ENCODE measurements at regions of chr1 and their contacts with region 1.

Region 1: DNA sequence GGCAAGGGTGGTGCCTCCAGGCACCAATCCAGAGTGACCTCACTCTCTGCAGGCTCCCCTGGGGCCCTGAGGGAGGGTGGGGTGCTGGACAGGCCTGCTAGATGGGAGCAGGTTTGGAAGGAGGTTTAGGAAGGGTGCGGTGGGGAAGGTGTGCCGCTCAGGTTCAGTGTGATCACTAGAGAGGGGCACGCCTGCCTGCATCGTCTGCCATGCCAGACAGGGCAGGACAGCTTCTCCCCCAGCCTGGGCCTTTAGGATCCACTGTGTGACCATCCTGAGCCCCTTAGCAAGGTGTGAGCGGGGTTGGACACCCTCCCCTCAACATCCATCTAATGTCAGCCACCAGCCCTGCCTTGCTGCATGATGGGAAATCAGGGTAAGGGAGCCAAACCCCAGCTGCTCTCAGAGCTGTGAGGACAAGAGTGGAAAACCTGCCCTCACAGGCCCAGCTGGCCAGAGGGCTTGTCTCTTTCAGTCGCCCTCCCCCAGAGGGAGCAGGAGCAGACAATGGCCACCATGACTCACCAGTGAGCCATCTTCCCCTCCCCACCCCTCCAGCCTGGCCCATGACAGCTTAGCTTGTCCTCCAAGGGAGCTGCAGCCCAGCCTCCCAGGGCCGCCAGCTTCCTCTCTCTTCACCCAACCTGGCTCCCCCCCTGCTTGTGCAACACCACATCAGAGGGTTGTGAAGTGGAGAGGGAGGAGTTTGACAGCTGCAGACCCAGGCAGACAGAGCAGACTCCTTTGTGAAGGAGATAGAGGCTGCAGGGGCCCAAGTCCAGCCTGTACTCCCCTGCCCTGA is 37.0 kb downstream of the NUAK2 start:
- DNase-seq: peak; percentile 85
- ATAC-seq: peak; percentile 71
- H3K4me3 Mint-ChIP-seq: peak overlapping the region; percentile 77
- H3K27ac Mint-ChIP-seq: peak overlapping the region; percentile 91
- H3K4me1 Mint-ChIP-seq: peaks cover 66% of the 10 kb centered on the region
- H3K27me3 Mint-ChIP-seq: peaks cover 23% of the 10 kb centered on the region

Region 2: GRCh38 chr1:205172729-205173366 is 111.7 kb before region 1 on chr1:
- POLR2A ChIA-PET with region 1: no interaction called
- DNase-seq: no peak
- ATAC-seq: no peak
- H3K4me3 Mint-ChIP-seq: no peak overlapping the region
- H3K27ac Mint-ChIP-seq: no peak overlapping the region
- H3K4me1 Mint-ChIP-seq: peaks cover 31% of the 10 kb centered on the region
- H3K27me3 Mint-ChIP-seq: no peaks in the 10 kb centered on the region

Region 3: DNA sequence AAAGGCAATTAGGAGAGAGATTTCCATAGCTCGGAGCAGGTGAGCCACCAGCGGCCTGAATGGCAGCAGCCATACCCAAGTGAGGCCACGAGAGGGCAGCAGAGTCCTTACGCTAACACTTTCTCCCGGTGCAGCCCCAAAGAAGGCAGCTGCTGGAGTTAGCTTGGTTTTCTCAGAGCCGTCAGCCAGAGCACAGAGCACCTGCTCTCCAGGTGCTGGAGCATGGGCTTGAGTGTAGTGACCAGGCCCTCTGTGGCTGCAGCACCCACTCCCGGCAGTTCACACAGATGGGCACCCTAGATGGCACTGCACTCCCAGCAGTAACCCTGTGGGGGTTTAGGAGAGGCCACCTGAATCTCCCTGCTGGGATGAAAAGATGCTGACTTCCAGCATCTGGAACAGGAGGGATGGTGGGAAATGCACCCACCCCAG is 11.0 kb before region 1 on chr1:
- POLR2A ChIA-PET with region 1: interaction called, 41 read pairs
- DNase-seq: peak; percentile 86
- ATAC-seq: peak; percentile 79
- H3K4me3 Mint-ChIP-seq: no peak overlapping the region
- H3K27ac Mint-ChIP-seq: no peak overlapping the region
- H3K4me1 Mint-ChIP-seq: peaks cover 9% of the 10 kb centered on the region
- H3K27me3 Mint-ChIP-seq: peaks cover 7% of the 10 kb centered on the region

Region 4: GRCh38 chr1:205298191-205298994 is 13.8 kb after region 1 on chr1:
- POLR2A ChIA-PET with region 1: interaction called, 12 read pairs
- DNase-seq: no peak
- ATAC-seq: no peak
- H3K4me3 Mint-ChIP-seq: no peak overlapping the region
- H3K27ac Mint-ChIP-seq: no peak overlapping the region
- H3K4me1 Mint-ChIP-seq: peaks cover 8% of the 10 kb centered on the region
- H3K27me3 Mint-ChIP-seq: peaks cover 27% of the 10 kb centered on the region

Region 5: DNA sequence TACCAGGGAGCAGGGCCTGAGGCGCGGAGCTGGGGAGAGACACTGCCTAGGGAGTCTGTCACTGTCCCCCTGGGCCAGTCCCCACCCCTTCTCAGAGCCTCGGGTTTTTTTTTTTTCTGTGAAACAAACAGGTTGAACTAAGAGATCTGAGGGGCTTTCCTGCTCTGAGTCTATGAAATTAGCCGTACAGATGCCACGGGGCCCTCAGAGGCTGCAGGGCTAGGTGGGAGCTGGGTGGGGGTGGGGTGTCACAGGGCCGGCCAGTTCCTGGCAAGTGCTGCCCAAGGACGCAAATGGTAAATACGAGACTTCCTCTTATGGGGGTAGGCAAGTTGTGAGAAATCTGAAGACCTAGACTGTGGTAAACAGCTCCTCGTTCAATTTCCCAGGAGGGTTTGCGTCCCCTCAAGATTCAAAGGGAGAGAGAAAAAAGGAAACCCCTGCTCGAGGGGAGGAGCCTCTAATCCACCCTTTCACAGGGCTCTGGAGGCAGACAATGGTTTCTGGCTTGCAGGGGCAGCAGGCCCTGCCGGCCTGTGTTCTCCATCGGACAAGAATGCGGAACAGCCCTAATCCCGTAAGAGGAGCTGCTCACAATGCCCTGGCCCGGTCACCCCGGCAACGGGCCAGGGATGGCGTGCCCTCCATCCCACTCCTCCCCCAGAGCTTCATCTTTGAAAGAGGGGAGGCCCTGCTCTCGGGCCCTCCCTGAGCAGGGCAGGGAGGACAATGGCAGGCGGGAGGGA is 29.2 kb after region 1 on chr1:
- POLR2A ChIA-PET with region 1: interaction called, 170 read pairs
- DNase-seq: peak; percentile 58
- ATAC-seq: peak; percentile 75
- H3K4me3 Mint-ChIP-seq: peak overlapping the region; percentile 79
- H3K27ac Mint-ChIP-seq: peak overlapping the region; percentile 83
- H3K4me1 Mint-ChIP-seq: peaks cover 43% of the 10 kb centered on the region
- H3K27me3 Mint-ChIP-seq: no peaks in the 10 kb centered on the region

Region 6: GRCh38 chr1:205321164-205321958 is 36.8 kb after region 1 on chr1 and contains the start of gene NUAK2:
- POLR2A ChIA-PET with region 1: interaction called, 170 read pairs
- DNase-seq: peak; percentile 82
- ATAC-seq: peak; percentile 79
- H3K4me3 Mint-ChIP-seq: peak within 1 kb of the TSS; percentile 87
- H3K27ac Mint-ChIP-seq: peak within 1 kb of the TSS; percentile 77
- H3K4me1 Mint-ChIP-seq: peaks cover 40% of the 10 kb centered on the region
- H3K27me3 Mint-ChIP-seq: peaks cover 24% of the 10 kb centered on the region
- total RNA-seq, gene NUAK2: 13.0 to 14.7 TPM

Region 7: GRCh38 chr1:205631727-205632373 is 347.3 kb after region 1 on chr1 and contains the start of gene ELK4:
- POLR2A ChIA-PET with region 1: interaction called, 12 read pairs
- DNase-seq: peak; percentile 99
- ATAC-seq: peak; percentile 81
- H3K4me3 Mint-ChIP-seq: peak within 1 kb of the TSS; percentile 96
- H3K27ac Mint-ChIP-seq: peak within 1 kb of the TSS; percentile 99
- H3K4me1 Mint-ChIP-seq: peaks cover 30% of the 10 kb centered on the region
- H3K27me3 Mint-ChIP-seq: no peaks in the 10 kb centered on the region
- total RNA-seq, gene ELK4: 124 to 141 TPM

Measured in activated naive CD8-positive, alpha-beta T cell treated with anti-CD3 and anti-CD28 coated beads, Interleukin-2, amount 10 ng/mL, durations not matched to agents 7 days and 5 days (primary cell).